ENCODE measurements at regions of chr7 and their contacts with region 1.

Region 1: DNA sequence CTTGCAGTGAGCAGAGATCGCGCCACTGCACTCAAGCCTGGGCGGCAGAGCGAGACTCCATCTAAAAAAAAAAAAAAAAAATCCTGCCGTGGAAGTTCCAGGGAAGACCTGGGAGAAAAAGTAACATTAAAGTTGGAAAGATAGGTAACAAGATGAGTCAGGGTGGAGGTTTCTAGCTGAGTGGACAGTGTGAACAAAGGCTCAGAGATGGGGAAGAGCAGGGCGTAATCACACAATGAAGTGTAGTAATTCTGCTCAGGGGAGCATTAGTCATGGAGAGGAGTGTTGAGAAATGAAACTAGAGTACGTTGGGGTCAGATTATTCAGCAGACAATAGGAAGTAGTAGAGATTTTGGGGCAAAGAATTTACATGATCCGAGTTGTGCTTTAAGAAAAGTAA is 21.6 kb upstream of the WASL start:
- DNase-seq: peak; percentile 18
- ATAC-seq: peak; percentile 100
- H3K4me3 Mint-ChIP-seq: no peak overlapping the region
- H3K27ac Mint-ChIP-seq: peak overlapping the region; percentile 14
- H3K4me1 Mint-ChIP-seq: peaks cover 8% of the 10 kb centered on the region
- H3K27me3 Mint-ChIP-seq: peaks cover 23% of the 10 kb centered on the region

Region 2: GRCh38 chr7:122702872-122703510 is 1067.4 kb before region 1 on chr7 and contains the start of gene RNF148:
- CTCF ChIA-PET with region 1: no interaction called
- POLR2A ChIA-PET with region 1: no interaction called
- intact Hi-C with region 1: no loop called
- DNase-seq: no peak
- ATAC-seq: no peak
- H3K4me3 Mint-ChIP-seq: no peak within 1 kb of the TSS
- H3K27ac Mint-ChIP-seq: no peak within 1 kb of the TSS
- H3K4me1 Mint-ChIP-seq: no peaks in the 10 kb centered on the region
- H3K27me3 Mint-ChIP-seq: no peaks in the 10 kb centered on the region
- total RNA-seq, gene RNF148: not detected

Region 3: DNA sequence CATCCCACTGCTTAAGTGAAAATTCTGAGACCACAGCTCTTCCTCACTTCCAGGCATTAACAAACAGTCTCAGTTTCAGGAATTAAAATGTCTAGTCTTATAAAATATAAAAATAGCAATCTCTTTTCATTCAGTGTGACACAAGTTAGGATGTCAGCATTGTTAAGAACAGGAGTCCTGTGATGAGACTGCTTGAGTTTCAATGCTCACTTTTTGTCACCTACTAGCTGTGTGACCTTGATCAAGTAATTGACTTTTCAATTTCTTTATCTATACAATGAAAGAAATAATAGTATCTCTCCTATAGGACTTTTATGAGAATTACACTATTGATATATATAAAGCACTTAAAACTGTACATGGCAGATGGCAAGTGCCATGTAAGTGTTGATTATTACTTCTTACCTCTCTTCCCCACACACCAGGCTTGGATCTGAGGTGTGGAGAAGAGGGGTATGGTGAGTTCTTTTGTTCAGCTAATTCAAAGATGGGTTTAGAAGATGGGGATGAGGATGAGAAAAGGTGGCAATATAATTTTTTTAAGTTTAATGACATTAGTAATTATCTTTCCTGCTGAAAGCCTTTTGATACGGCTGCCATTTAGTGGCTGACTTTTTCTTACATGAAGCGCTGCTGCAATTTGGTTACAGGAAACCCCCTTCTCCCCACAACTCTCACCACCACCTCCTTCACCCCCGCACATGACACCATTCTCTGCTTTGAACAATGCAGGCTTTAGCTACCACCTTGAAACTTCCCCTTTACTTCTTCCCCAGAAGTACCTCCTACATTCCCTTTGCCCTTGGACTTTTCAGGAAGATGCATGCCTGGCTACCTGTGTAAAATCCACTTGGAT is 53.7 kb after region 1 on chr7:
- CTCF ChIA-PET with region 1: no interaction called
- POLR2A ChIA-PET with region 1: no interaction called
- intact Hi-C with region 1: loop called in 1 of 2 experiments (anchors 2 kb)
- DNase-seq: peak; percentile 81
- ATAC-seq: peak; percentile 90
- H3K4me3 Mint-ChIP-seq: peak overlapping the region; percentile 56
- H3K27ac Mint-ChIP-seq: peak overlapping the region; percentile 68
- H3K4me1 Mint-ChIP-seq: peaks cover 23% of the 10 kb centered on the region
- H3K27me3 Mint-ChIP-seq: peaks cover 15% of the 10 kb centered on the region

Region 4: DNA sequence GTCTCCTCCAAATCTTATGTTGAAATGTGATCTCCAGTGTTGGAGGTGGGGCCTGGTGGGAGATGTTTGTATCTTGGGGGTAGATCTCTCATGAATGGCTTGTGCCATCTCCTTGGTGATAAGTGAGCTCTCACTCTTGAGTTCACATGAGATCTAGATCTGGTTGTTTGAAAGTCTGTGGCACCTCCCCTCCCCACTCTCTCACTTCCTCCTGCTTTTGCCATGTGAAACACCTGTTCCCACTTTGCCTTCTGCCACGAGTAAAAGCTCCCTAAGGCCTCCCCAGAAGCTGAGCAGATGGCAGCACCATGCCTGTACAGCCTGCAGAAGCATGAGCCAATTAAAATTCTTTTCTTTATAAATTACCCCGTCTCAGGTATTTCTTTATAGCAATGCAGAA is 238.9 kb after region 1 on chr7:
- CTCF ChIA-PET with region 1: no interaction called
- POLR2A ChIA-PET with region 1: no interaction called
- intact Hi-C with region 1: no loop called
- DNase-seq: no peak
- ATAC-seq: no peak
- H3K4me3 Mint-ChIP-seq: no peak overlapping the region
- H3K27ac Mint-ChIP-seq: no peak overlapping the region
- H3K4me1 Mint-ChIP-seq: no peaks in the 10 kb centered on the region
- H3K27me3 Mint-ChIP-seq: peaks cover 5% of the 10 kb centered on the region